MCF 10A (cell line): ENCODE measurements at regions of chr2 and their contacts with region 1.

Region 1: GRCh38 chr2:35783725-35784124 is 571.9 kb upstream of the CRIM1 start:
- DNase-seq: peak; percentile 32
- H3K4me3 Mint-ChIP-seq: no peak overlapping the region
- H3K27ac Mint-ChIP-seq: no peak overlapping the region
- H3K4me1 Mint-ChIP-seq: no peaks in the 10 kb centered on the region
- H3K27me3 Mint-ChIP-seq: peaks cover 10% of the 10 kb centered on the region
- CTCF ChIP-seq: no peak

Region 2: DNA sequence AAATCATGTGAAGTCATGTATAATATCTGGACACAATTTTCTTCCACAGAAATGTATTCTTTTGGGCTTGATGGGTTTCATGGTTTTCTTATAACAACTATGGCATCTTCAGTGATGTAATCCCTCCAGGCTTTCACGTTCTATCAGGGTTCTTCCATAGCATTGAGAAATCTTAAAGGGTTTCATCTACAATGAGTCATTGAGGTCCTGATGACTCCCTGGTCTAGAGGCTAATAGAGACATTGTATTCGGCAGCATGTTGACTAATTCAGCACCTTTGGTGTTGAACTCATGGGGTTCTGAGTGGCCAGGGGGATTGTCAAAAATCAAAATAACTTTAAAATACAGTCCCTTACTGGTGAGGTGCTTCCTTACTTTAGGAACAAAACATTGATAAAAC is 42.2 kb before region 1 on chr2:
- CTCF ChIA-PET with region 1: no interaction called
- POLR2A ChIA-PET with region 1: no interaction called
- intact Hi-C with region 1: loop called (anchors 5 kb)
- DNase-seq: peak; percentile 46
- H3K4me3 Mint-ChIP-seq: no peak overlapping the region
- H3K27ac Mint-ChIP-seq: no peak overlapping the region
- H3K4me1 Mint-ChIP-seq: no peaks in the 10 kb centered on the region
- H3K27me3 Mint-ChIP-seq: peaks cover 13% of the 10 kb centered on the region
- CTCF ChIP-seq: no peak

Region 3: GRCh38 chr2:35830833-35831232 is 47.1 kb after region 1 on chr2:
- CTCF ChIA-PET with region 1: no interaction called
- POLR2A ChIA-PET with region 1: no interaction called
- intact Hi-C with region 1: no loop called
- DNase-seq: no peak
- H3K4me3 Mint-ChIP-seq: no peak overlapping the region
- H3K27ac Mint-ChIP-seq: no peak overlapping the region
- H3K4me1 Mint-ChIP-seq: no peaks in the 10 kb centered on the region
- H3K27me3 Mint-ChIP-seq: peaks cover under 1% of the 10 kb centered on the region
- CTCF ChIP-seq: no peak